ENCODE measurements at regions of chr14 and their contacts with region 1.

Region 1: GRCh38 chr14:91323671-91324605 is 79.4 kb upstream of the GPR68 start:
- DNase-seq: peak; percentile 91
- H3K4me3 ChIP-seq: peak overlapping the region in 2 of 4 donors; percentile 7 to 38
- H3K27ac ChIP-seq: peak overlapping the region; percentile 60 to 80 (median 62)
- H3K4me1 ChIP-seq: peaks cover 0 to 18% (median 8%) of the 10 kb centered on the region in 4 donors
- H3K27me3 ChIP-seq: no peaks in the 10 kb centered on the region
- CTCF ChIP-seq: peak; percentile 95 to 99 (median 97)
- EP300 ChIP-seq: no peak
- POLR2A ChIP-seq: no peak

Region 2: DNA sequence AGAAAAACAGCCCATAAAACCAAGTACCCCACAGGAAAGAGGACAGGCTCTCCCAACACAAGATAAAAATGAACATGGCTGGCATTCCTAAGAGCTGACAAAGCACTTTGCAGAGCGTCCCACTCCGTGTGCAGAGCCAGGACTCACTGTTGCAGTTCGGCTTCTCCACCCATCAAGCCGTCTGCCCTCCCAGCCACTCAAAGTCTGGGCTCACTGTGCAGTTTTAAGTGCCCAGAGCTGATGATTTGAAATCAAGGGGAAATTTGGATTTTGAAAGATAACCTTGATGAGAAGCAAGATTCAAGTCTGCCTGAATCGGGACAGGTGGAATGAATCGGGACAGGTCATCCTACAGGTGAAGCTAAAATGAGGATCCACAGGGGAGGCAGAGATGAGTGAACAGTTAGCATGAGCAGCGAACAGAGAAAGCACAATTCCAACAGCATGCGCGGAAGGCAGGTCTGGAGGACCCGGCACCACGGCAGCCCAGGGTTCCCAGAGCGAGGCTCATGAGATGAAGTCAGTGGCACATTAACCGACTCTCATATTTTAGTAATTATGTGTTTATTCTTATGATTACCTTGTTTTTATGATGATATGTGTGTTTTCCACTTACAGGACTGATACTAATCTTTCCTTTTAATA is 39.7 kb before region 1 on chr14:
- in situ Hi-C with region 1: no loop called
- intact Hi-C with region 1: no loop called
- DNase-seq: no peak
- H3K4me3 ChIP-seq: no peak overlapping the region
- H3K27ac ChIP-seq: peak overlapping the region in 3 of 4 donors; percentile 31 to 52 (median 43)
- H3K4me1 ChIP-seq: peaks cover 0 to 14% (median 6%) of the 10 kb centered on the region in 4 donors
- H3K27me3 ChIP-seq: no peaks in the 10 kb centered on the region
- CTCF ChIP-seq: no peak
- EP300 ChIP-seq: no peak
- POLR2A ChIP-seq: no peak

Region 3: DNA sequence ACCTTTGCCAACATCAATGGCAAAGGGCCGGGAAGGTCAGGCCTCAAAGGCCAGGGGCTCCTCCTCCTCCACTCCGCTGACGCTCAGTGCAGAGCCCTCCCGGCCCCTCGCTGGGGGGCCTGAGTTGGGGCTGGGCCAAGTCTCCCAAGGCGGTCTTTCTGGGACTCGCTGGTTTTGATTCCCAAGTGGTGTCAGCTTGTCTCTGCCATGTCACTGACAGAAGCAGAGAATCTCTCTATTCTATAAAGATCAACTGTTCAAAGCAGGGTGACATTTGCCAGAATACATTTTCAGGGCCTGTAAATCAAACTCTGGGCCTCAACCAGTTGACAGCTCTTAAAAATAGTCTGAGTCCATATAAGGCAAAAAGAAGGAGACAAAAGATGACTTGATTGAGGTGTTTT is 17.8 kb after region 1 on chr14:
- in situ Hi-C with region 1: no loop called
- intact Hi-C with region 1: no loop called
- DNase-seq: no peak
- H3K4me3 ChIP-seq: no peak overlapping the region
- H3K27ac ChIP-seq: no peak overlapping the region
- H3K4me1 ChIP-seq: peaks cover 0 to 4% (median 0%) of the 10 kb centered on the region in 4 donors
- H3K27me3 ChIP-seq: no peaks in the 10 kb centered on the region
- CTCF ChIP-seq: no peak
- EP300 ChIP-seq: no peak
- POLR2A ChIP-seq: no peak

Region 4: GRCh38 chr14:91418387-91419043 is 94.6 kb after region 1 on chr14:
- in situ Hi-C with region 1: loop called (anchors 5 to 25 kb)
- intact Hi-C with region 1: loop called (anchors 5 kb)
- DNase-seq: peak; percentile 81
- H3K4me3 ChIP-seq: peak overlapping the region; percentile 11 to 85 (median 76)
- H3K27ac ChIP-seq: peak overlapping the region; percentile 71 to 89 (median 83)
- H3K4me1 ChIP-seq: peaks cover 7 to 44% (median 28%) of the 10 kb centered on the region in 4 donors
- H3K27me3 ChIP-seq: no peaks in the 10 kb centered on the region
- CTCF ChIP-seq: peak; percentile 98 to 100 (median 99)
- EP300 ChIP-seq: no peak
- POLR2A ChIP-seq: no peak

Region 5: DNA sequence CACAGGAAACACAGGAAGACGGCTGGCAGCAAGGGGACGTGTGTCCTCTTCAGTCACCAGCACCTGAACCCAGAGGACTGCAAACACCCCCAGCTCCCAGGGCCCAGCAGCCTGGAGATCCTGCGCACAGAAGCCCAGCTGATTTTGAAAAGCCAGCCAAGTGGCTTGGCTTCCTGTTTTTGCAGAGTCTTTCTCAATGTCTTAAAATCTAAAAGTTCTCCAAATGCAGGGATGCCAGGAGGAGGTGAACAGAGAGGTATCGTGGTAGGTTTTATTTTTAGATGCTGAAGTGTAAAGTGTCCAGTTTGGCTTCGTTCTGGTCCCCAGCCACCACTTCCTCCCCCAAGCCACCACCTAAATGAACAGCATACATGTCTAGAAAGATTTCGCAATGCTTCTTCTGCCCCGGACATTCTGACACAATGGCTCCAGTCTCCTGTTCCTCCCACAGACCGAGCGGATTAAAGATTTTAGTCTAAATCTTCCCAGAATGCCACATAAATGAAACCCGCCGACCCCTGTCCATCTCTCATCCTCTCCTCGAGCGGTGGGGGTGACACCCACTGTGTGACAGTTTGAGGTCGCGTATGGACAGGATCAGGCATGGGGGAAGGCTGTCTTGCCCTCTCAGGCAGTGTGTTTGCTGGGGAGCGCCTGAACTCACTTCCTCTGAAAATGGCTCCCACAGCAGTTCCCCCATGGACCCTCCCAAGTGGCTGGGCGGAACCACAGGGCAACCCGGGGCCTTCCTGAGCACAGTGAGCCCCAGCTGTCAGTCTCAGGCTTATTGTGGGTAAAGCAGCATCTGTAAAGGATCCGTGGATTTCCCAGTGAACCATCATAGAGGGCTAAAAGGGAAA is 1750.2 kb after region 1 on chr14:
- in situ Hi-C with region 1: no loop called
- intact Hi-C with region 1: loop called (anchors 5 kb)
- DNase-seq: no peak
- H3K4me3 ChIP-seq: no peak overlapping the region
- H3K27ac ChIP-seq: peak overlapping the region; percentile 63 to 73 (median 70)
- H3K4me1 ChIP-seq: peaks cover 15 to 46% (median 22%) of the 10 kb centered on the region in 4 donors
- H3K27me3 ChIP-seq: no peaks in the 10 kb centered on the region
- CTCF ChIP-seq: no peak
- EP300 ChIP-seq: no peak
- POLR2A ChIP-seq: no peak